Right ventricle myocardium inferior (tissue), 1 donor: ENCODE measurements at regions of chr17 and their contacts with region 1.

Region 1: GRCh38 chr17:41548844-41549595 is 20.9 kb upstream of the KRT19 start:
- DNase-seq: peak; percentile 92
- ATAC-seq: peak; percentile 85

Region 2: GRCh38 chr17:40803617-40804082 is 745.4 kb before region 1 on chr17:
- intact Hi-C with region 1: loop called (anchors 2 kb)
- DNase-seq: peak; percentile 87
- ATAC-seq: peak; percentile 81

Region 3: DNA sequence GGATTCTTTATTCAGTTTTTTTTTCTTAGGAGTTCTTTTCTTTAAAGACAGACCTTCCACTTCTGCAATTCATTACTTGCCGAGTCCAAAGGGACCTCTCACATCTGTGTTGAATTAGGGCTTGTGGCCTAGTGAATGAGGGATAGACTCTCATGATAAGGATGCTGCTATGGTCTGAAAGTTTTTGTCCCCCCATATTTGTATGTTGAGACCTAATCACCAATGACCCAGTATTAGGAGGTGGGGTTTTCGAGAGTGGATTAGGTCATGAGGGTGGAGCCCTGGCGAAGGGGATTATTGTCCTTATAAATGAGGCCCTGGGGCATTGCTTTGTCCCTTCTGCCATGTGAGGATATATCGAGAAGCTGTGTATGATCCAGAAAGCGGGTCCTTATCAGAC is 691.5 kb before region 1 on chr17:
- intact Hi-C with region 1: loop called (anchors 5 kb)
- DNase-seq: no peak
- ATAC-seq: peak; percentile 67

Region 4: GRCh38 chr17:40909351-40909750 is 639.7 kb before region 1 on chr17:
- intact Hi-C with region 1: loop called (anchors 1 kb)
- DNase-seq: peak; percentile 82
- ATAC-seq: peak; percentile 90